Gastrocnemius medialis (tissue), 4 donors: ENCODE measurements at regions of chr19 and their contacts with region 1.

Region 1: GRCh38 chr19:3762501-3763459 is at the start of gene MRPL54:
- DNase-seq: peak; percentile 98 to 99
- ATAC-seq: peak; percentile 95 to 96
- H3K4me3 ChIP-seq: peak within 1 kb of the TSS; percentile 83 to 97 (median 90)
- H3K27ac ChIP-seq: peak within 1 kb of the TSS; percentile 92 to 100 (median 98)
- H3K4me1 ChIP-seq: peaks cover 21 to 22% of the 10 kb centered on the region in 2 donors
- H3K27me3 ChIP-seq: no peaks in the 10 kb centered on the region
- CTCF ChIP-seq: no peak
- POLR2A ChIP-seq: peak; percentile 68 to 78
- total RNA-seq, gene MRPL54: 23.3 to 86.3 (median 63.3) TPM

Region 2: DNA sequence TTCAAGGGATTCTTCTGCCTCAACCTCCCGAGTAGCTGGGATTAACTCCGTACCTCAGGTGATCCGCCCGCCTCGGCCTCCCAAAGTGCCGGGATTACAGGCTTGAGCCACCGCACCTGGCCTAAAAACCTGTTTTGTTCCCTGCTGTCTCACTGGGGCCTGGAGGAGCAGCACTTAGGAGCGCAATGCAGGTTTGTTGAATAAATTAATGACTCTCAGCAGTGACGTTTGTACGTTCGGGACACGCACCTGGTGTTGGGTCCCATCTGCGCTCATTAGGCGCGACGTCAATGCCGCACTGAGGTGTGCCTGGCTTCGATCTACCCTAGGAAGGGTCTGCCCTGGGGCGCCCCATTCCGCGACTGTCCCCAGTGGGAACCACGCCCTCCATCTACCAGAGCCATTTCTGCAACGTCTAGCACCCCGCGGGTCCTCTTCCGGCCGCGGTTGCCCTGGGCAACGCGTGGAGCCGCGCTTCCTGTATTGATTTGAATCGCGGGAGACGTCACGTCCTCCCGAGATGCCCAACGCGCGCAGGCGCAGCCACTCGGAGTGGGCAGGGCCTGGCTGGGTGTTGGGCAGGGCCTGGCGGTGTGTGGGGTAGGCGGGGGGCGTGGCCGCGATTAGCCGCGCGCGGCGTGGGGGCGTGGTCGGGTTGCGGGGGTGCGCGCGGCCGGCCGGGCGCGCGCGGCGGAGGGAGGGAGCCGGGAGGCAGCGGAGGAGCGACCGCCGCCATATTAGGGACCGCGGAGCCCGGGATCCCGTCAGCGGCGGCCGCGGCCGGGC is 257.0 kb before region 1 on chr19 and contains the start of gene FZR1:
- in situ Hi-C with region 1: no loop called
- intact Hi-C with region 1: loop called (anchors 5 kb)
- DNase-seq: peak; percentile 96 to 98
- ATAC-seq: peak; percentile 92 to 95
- H3K4me3 ChIP-seq: peak within 1 kb of the TSS; percentile 56 to 100 (median 82)
- H3K27ac ChIP-seq: peak within 1 kb of the TSS; percentile 80 to 90 (median 84)
- H3K4me1 ChIP-seq: peaks cover 15 to 35% of the 10 kb centered on the region in 2 donors
- H3K27me3 ChIP-seq: no peaks in the 10 kb centered on the region
- CTCF ChIP-seq: no peak
- POLR2A ChIP-seq: peak; percentile 88
- total RNA-seq, gene FZR1: 15.9 to 32.0 (median 21.0) TPM

Region 3: GRCh38 chr19:3655402-3656072 is 107.2 kb before region 1 on chr19:
- in situ Hi-C with region 1: no loop called
- intact Hi-C with region 1: no loop called
- DNase-seq: no peak
- ATAC-seq: no peak
- H3K4me3 ChIP-seq: no peak overlapping the region
- H3K27ac ChIP-seq: no peak overlapping the region
- H3K4me1 ChIP-seq: peaks cover under 1 to 1% of the 10 kb centered on the region in 2 donors
- H3K27me3 ChIP-seq: no peaks in the 10 kb centered on the region
- CTCF ChIP-seq: no peak
- POLR2A ChIP-seq: no peak

Region 4: GRCh38 chr19:3774621-3775373 is 12.0 kb after region 1 on chr19:
- in situ Hi-C with region 1: no loop called
- intact Hi-C with region 1: no loop called
- DNase-seq: no peak
- ATAC-seq: no peak
- H3K4me3 ChIP-seq: no peak overlapping the region
- H3K27ac ChIP-seq: no peak overlapping the region
- H3K4me1 ChIP-seq: no peaks in the 10 kb centered on the region
- H3K27me3 ChIP-seq: peaks cover 0 to 2% (median 0%) of the 10 kb centered on the region in 3 donors
- CTCF ChIP-seq: no peak
- POLR2A ChIP-seq: no peak

Region 5: GRCh38 chr19:5690125-5690954 is 1927.6 kb after region 1 on chr19 and contains the start of gene RPL36:
- in situ Hi-C with region 1: no loop called
- intact Hi-C with region 1: loop called (anchors 5 kb)
- DNase-seq: peak; percentile 96
- ATAC-seq: peak; percentile 76 to 77
- H3K4me3 ChIP-seq: peak within 1 kb of the TSS; percentile 71 to 93 (median 84)
- H3K27ac ChIP-seq: peak within 1 kb of the TSS; percentile 83 to 94 (median 86)
- H3K4me1 ChIP-seq: peaks cover 21 to 25% of the 10 kb centered on the region in 2 donors
- H3K27me3 ChIP-seq: no peaks in the 10 kb centered on the region
- CTCF ChIP-seq: peak; percentile 94 to 98 (median 95)
- POLR2A ChIP-seq: peak; percentile 86 to 91
- total RNA-seq, gene RPL36: 329 to 784 (median 462) TPM